ENCODE measurements at regions of chr18 and their contacts with region 1.

Region 1: GRCh38 chr18:31722369-31722957 is 38.1 kb upstream of the B4GALT6 start:
- DNase-seq: peak; percentile 53 to 83 (median 75)
- H3K4me3 ChIP-seq: no peak overlapping the region
- H3K27ac ChIP-seq: no peak overlapping the region
- H3K4me1 ChIP-seq: no peaks in the 10 kb centered on the region
- H3K27me3 ChIP-seq: no peaks in the 10 kb centered on the region
- CTCF ChIP-seq: peak; percentile 22 to 73 (median 52)
- EP300 ChIP-seq: no peak
- POLR2A ChIP-seq: no peak

Region 2: GRCh38 chr18:31438402-31438801 is 284.1 kb before region 1 on chr18:
- intact Hi-C with region 1: no loop called
- DNase-seq: no peak
- H3K4me3 ChIP-seq: no peak overlapping the region
- H3K27ac ChIP-seq: no peak overlapping the region
- H3K4me1 ChIP-seq: no peaks in the 10 kb centered on the region
- H3K27me3 ChIP-seq: no peaks in the 10 kb centered on the region
- CTCF ChIP-seq: no peak
- EP300 ChIP-seq: no peak
- POLR2A ChIP-seq: no peak

Region 3: GRCh38 chr18:31624892-31625640 is 97.4 kb before region 1 on chr18:
- intact Hi-C with region 1: loop called in 1 of 4 experiments (anchors 5 kb)
- DNase-seq: no peak
- H3K4me3 ChIP-seq: no peak overlapping the region
- H3K27ac ChIP-seq: no peak overlapping the region
- H3K4me1 ChIP-seq: no peaks in the 10 kb centered on the region
- H3K27me3 ChIP-seq: no peaks in the 10 kb centered on the region
- CTCF ChIP-seq: no peak
- EP300 ChIP-seq: no peak
- POLR2A ChIP-seq: no peak

Measured in ovary (tissue), 10 donors.